Mammary epithelial cell (primary cell): ENCODE measurements at regions of chr16 and their contacts with region 1.

Region 1: DNA sequence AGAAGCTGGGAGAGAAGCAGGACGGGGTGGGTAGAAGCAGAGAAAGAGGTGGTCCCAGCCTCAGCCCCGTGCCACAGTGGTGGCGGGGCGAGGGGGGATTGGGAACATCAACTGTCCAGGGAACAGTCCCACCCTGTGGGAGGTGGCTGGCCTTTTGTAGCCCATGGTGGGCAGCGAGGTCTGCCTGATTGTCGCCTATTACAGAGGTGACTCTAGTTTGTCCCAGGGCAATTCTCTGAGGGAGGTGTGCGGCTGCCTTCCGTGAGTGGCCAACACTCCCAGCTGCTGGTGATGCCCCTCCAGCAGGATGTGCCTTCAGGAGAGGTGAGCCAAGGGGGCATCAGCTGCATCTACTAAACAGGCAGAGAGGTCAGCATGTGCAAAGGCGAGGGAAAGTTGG is 5.0 kb upstream of the BRD7 start:
- DNase-seq: no peak
- H3K4me3 ChIP-seq: no peak overlapping the region
- H3K27ac ChIP-seq: no peak overlapping the region
- H3K4me1 ChIP-seq: peaks cover 9% of the 10 kb centered on the region
- H3K27me3 ChIP-seq: no peaks in the 10 kb centered on the region
- CTCF ChIP-seq: no peak

Region 2: DNA sequence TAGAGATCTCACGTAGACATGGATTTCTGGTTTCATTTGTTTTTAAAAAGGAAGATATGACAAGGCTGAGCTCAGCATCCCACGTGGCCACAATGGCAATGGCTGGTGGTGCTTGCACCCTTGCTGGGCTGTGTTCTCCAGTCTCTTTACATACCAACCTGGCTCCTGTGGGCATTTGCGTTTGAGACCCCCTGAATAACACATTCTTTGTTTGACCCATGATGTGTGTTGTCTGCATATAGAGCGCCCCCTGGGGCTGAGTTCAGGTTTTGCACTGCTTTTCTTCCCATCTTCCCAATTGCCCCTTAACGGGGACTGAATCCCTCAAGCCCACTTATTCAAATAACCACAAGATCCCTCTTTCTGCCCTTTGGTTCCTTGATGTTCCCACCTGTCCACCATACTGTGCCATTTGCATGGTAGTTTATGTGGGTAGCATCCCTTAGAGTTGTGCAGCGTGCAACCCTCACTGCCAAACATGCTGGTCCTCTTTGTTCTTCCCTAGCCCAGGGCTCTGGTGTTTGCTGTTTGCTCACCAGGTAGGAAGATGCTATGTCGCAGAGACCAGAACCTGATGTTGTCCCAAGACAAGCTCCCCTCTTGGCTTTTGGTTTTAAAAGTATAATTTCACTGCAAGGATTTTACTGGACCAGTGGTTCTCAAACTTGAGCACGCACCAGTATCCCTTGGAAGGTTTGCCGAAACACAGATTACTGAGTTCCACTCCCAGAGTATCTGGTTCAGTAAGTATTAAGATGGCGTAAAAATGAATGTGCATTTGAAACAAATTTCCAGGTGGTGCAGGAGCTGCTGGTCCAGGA is 136.0 kb after region 1 on chr16:
- CTCF ChIA-PET with region 1: no interaction called
- dilution Hi-C with region 1: no loop called
- in situ Hi-C with region 1: no loop called
- intact Hi-C with region 1: loop called (anchors 1 kb)
- DNase-seq: no peak
- H3K4me3 ChIP-seq: no peak overlapping the region
- H3K27ac ChIP-seq: no peak overlapping the region
- H3K4me1 ChIP-seq: no peaks in the 10 kb centered on the region
- H3K27me3 ChIP-seq: no peaks in the 10 kb centered on the region
- CTCF ChIP-seq: peak; percentile 81 to 86

Region 3: DNA sequence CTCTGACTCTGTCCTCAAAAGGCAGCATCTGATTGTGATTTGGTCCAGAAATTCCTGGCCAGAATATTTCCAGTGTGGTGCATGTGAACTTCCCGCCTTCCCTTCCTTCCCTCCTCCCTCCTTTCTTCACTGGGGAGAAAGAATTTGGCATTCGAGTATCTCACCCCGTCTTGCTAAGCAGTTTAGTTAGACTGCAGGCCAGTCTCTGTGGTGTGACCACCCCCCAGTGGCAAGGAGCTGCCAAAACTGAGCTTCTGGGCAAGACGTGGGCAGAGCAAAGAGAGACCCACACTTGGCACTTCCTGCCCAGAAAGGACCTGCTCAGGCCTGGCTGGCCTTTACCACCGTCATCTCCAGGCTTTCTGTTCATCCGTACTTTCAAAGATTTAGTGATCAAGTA is 270.9 kb after region 1 on chr16:
- CTCF ChIA-PET with region 1: interaction called, 3 read pairs
- dilution Hi-C with region 1: no loop called
- in situ Hi-C with region 1: no loop called
- intact Hi-C with region 1: loop called (anchors 1 kb)
- DNase-seq: peak; percentile 23
- H3K4me3 ChIP-seq: no peak overlapping the region
- H3K27ac ChIP-seq: no peak overlapping the region
- H3K4me1 ChIP-seq: no peaks in the 10 kb centered on the region
- H3K27me3 ChIP-seq: no peaks in the 10 kb centered on the region
- CTCF ChIP-seq: peak; percentile 32 to 64